Activated T-helper 1 cell treated with anti-CD3 and anti-CD28 coated beads, Interleukin-12 subunit alpha, Interleukin-12 subunit beta, Interleukin-2, Interleukin-4 antibody, amounts not matched to agents 30 ng/mL and 10 ng/mL and 1 ng/mL, durations not matched to agents 14 hours and 24 hours and 36 hours (primary cell): ENCODE measurements at regions of chr1 and their contacts with region 1.

Region 1: GRCh38 chr1:44970317-44970716 is 16.1 kb downstream of the EIF2B3 start:
- DNase-seq: no peak
- H3K4me3 Mint-ChIP-seq: no peak overlapping the region
- H3K27ac Mint-ChIP-seq: no peak overlapping the region
- H3K4me1 Mint-ChIP-seq: no peaks in the 10 kb centered on the region
- H3K27me3 Mint-ChIP-seq: no peaks in the 10 kb centered on the region

Region 2: DNA sequence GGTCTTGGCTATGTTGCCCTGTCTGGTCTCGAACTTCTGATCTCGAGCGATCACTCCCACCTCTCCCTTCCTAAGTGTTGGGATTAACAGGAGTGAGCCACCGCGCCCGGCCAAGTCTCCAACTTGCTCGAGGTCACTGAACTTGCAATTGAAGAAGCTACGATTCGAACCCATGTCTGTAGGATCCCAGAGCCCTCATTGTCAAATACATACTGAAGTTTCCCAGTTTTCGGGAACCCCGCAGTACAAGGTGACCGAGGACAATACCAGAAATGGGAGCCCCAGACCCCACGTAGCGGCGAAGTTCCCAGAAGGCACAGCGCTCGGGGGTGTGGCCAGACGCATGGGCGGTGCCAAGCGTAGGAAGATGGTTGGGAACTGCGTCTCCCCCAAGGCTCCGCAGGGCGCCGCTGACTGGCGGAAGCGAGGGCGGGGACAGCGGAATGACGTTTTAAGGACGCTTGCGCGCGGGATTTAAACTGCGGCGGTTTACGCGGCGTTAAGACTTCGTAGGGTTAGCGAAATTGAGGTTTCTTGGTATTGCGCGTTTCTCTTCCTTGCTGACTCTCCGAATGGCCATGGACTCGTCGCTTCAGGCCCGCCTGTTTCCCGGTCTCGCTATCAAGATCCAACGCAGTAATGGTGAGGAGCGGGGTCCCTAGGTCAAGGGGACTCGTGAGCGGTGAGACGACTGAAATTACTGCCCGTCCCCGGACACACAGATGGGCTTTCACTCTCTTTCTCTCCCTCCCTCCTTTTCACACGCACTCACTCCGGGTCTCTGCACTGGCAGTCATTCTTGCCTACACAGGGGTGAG is 230.7 kb before region 1 on chr1 and contains the start of gene KIF2C:
- intact Hi-C with region 1: no loop called
- DNase-seq: peak; percentile 95
- H3K4me3 Mint-ChIP-seq: peak within 1 kb of the TSS; percentile 92
- H3K27ac Mint-ChIP-seq: peak within 1 kb of the TSS; percentile 90
- H3K4me1 Mint-ChIP-seq: peaks cover 37% of the 10 kb centered on the region
- H3K27me3 Mint-ChIP-seq: no peaks in the 10 kb centered on the region
- total RNA-seq, gene KIF2C: 68.7 and 72.9 TPM in 2 replicates

Region 3: GRCh38 chr1:44950892-44951291 is 19.4 kb before region 1 on chr1:
- intact Hi-C with region 1: loop called (anchors 2 kb)
- DNase-seq: no peak
- H3K4me3 Mint-ChIP-seq: no peak overlapping the region
- H3K27ac Mint-ChIP-seq: no peak overlapping the region
- H3K4me1 Mint-ChIP-seq: peaks cover 22% of the 10 kb centered on the region
- H3K27me3 Mint-ChIP-seq: no peaks in the 10 kb centered on the region

Region 4: DNA sequence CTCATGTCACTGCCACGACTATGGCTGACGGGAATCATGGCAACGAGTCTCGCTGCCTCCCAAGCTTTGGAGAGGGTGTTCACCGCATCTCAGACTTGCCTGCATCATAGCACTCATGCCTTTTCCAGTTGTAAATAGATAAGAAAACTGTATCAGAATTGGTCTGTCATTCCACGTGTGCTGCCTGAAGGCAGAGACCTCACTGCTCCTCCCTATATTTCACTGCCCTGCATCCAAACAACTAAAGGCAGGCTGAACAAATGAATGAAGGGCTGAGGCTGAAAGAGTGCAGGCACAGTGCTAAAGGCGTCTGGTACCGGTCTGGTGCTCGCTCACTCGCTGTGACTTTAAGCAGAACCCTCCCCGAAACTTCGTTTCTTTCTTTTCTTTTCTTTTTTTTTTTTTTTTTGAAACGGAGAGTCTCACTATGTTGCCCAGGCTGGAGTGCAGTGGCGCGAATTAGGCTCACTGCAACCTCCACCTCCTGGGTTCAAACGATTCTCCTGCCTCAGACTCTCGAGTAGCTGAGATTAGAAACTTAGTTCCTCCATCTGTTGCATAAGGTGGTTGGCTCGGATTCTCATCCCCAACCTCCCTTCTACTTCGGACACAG is 15.5 kb after region 1 on chr1:
- intact Hi-C with region 1: no loop called
- DNase-seq: no peak
- H3K4me3 Mint-ChIP-seq: peak overlapping the region; percentile 100
- H3K27ac Mint-ChIP-seq: peak overlapping the region; percentile 94
- H3K4me1 Mint-ChIP-seq: peaks cover 21% of the 10 kb centered on the region
- H3K27me3 Mint-ChIP-seq: peaks cover 2% of the 10 kb centered on the region

Region 5: GRCh38 chr1:45011837-45012638 is 41.7 kb after region 1 on chr1 and contains the start of gene UROD:
- intact Hi-C with region 1: no loop called
- DNase-seq: peak; percentile 86
- H3K4me3 Mint-ChIP-seq: peak within 1 kb of the TSS; percentile 84
- H3K27ac Mint-ChIP-seq: peak within 1 kb of the TSS; percentile 90
- H3K4me1 Mint-ChIP-seq: peaks cover 58% of the 10 kb centered on the region
- H3K27me3 Mint-ChIP-seq: no peaks in the 10 kb centered on the region
- total RNA-seq, gene UROD: 79.9 and 81.9 TPM in 2 replicates